Naive thymus-derived CD4-positive, alpha-beta T cell (primary cell): ENCODE measurements at regions of chr6 and their contacts with region 1.

Region 1: GRCh38 chr6:6547110-6547879 is 41.2 kb upstream of the LY86 start:
- DNase-seq: peak; percentile 62 to 88 (median 77)
- ATAC-seq: peak; percentile 95
- H3K4me3 ChIP-seq: peak overlapping the region; percentile 59
- H3K4me3 Mint-ChIP-seq: peak overlapping the region; percentile 75 to 88 (median 81)
- H3K27ac ChIP-seq: no peak overlapping the region
- H3K27ac Mint-ChIP-seq: peak overlapping the region in 2 of 9 donors; percentile 17 to 33
- H3K4me1 ChIP-seq: peaks cover 0 to 13% of the 10 kb centered on the region in 2 donors
- H3K4me1 Mint-ChIP-seq: peaks cover 0 to 9% (median 4%) of the 10 kb centered on the region in 7 donors
- H3K27me3 ChIP-seq: peaks cover 0 to 16% of the 10 kb centered on the region in 2 donors
- H3K27me3 Mint-ChIP-seq: peaks cover 35 to 78% (median 50%) of the 10 kb centered on the region in 5 donors

Region 2: GRCh38 chr6:5214570-5215052 is 1332.7 kb before region 1 on chr6:
- CTCF ChIA-PET with region 1: no interaction called
- POLR2A ChIA-PET with region 1: no interaction called
- intact Hi-C with region 1: loop called in 1 of 2 experiments (anchors 5 kb)
- DNase-seq: peak in 2 of 9 donors; percentile 5 to 32
- ATAC-seq: no peak
- H3K4me3 ChIP-seq: no peak overlapping the region
- H3K4me3 Mint-ChIP-seq: no peak overlapping the region
- H3K27ac ChIP-seq: no peak overlapping the region
- H3K27ac Mint-ChIP-seq: no peak overlapping the region
- H3K4me1 ChIP-seq: no peaks in the 10 kb centered on the region
- H3K4me1 Mint-ChIP-seq: peaks cover 0 to 5% (median 0%) of the 10 kb centered on the region in 7 donors
- H3K27me3 ChIP-seq: no peaks in the 10 kb centered on the region
- H3K27me3 Mint-ChIP-seq: no peaks in the 10 kb centered on the region

Region 3: DNA sequence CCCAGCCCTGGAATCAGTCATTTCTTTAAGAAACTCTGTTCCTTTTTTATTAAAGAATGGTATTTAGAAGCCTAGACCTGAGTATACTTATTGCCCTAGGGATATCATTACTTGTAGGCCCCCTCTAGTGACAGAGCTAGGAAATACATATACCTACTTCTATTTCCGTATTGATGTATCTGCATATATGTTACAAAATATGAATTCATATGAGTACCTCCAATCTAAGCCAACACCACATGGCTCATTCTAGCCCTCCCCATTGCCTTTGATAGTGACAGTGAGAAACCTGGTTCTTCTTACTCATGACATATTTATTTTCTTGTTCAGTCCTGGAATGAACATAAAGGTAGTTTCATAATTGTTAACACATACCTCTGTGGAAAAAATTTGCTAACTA is 1148.8 kb before region 1 on chr6:
- CTCF ChIA-PET with region 1: no interaction called
- POLR2A ChIA-PET with region 1: no interaction called
- intact Hi-C with region 1: loop called in 1 of 2 experiments (anchors 5 kb)
- DNase-seq: peak in 6 of 9 donors; percentile 17 to 43 (median 33)
- ATAC-seq: peak; percentile 71
- H3K4me3 ChIP-seq: no peak overlapping the region
- H3K4me3 Mint-ChIP-seq: no peak overlapping the region
- H3K27ac ChIP-seq: no peak overlapping the region
- H3K27ac Mint-ChIP-seq: no peak overlapping the region
- H3K4me1 ChIP-seq: no peaks in the 10 kb centered on the region
- H3K4me1 Mint-ChIP-seq: peaks cover 3 to 18% (median 9%) of the 10 kb centered on the region in 7 donors
- H3K27me3 ChIP-seq: no peaks in the 10 kb centered on the region
- H3K27me3 Mint-ChIP-seq: no peaks in the 10 kb centered on the region

Region 4: GRCh38 chr6:5584078-5584482 is 963.2 kb before region 1 on chr6:
- CTCF ChIA-PET with region 1: no interaction called
- POLR2A ChIA-PET with region 1: no interaction called
- intact Hi-C with region 1: loop called in 1 of 2 experiments (anchors 5 kb)
- DNase-seq: no peak
- ATAC-seq: no peak
- H3K4me3 ChIP-seq: no peak overlapping the region
- H3K4me3 Mint-ChIP-seq: peak overlapping the region in 1 of 10 donors; percentile 45
- H3K27ac ChIP-seq: no peak overlapping the region
- H3K27ac Mint-ChIP-seq: no peak overlapping the region
- H3K4me1 ChIP-seq: peaks cover 0 to 12% of the 10 kb centered on the region in 2 donors
- H3K4me1 Mint-ChIP-seq: peaks cover 9 to 25% (median 19%) of the 10 kb centered on the region in 7 donors
- H3K27me3 ChIP-seq: no peaks in the 10 kb centered on the region
- H3K27me3 Mint-ChIP-seq: no peaks in the 10 kb centered on the region

Region 5: DNA sequence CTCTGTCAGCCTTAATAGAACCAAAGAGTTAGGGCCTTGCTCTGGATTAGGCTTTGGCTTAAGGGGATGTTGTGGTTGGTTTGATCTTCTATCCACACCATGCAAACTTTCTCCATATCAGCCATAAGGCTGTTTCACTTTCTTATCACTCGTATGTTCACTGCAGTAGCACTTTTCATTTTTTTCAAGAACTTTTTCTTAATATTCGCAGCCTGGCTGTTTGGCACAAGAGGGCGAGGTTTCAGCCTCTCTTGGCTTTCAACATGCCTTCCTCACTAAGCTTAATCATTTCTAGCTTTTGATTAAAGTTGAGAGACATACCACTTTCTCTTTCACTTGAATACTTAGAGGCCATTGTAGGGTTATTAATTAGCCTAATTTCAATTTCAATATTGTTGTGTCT is 733.7 kb before region 1 on chr6:
- CTCF ChIA-PET with region 1: no interaction called
- POLR2A ChIA-PET with region 1: no interaction called
- intact Hi-C with region 1: loop called in 1 of 2 experiments (anchors 1 kb)
- DNase-seq: peak in 2 of 9 donors; percentile 13 to 29
- ATAC-seq: no peak
- H3K4me3 ChIP-seq: no peak overlapping the region
- H3K4me3 Mint-ChIP-seq: peak overlapping the region; percentile 1 to 65 (median 52)
- H3K27ac ChIP-seq: no peak overlapping the region
- H3K27ac Mint-ChIP-seq: peak overlapping the region; percentile 2 to 90 (median 71)
- H3K4me1 ChIP-seq: peaks cover 4 to 12% of the 10 kb centered on the region in 2 donors
- H3K4me1 Mint-ChIP-seq: peaks cover 18 to 39% (median 28%) of the 10 kb centered on the region in 7 donors
- H3K27me3 ChIP-seq: no peaks in the 10 kb centered on the region
- H3K27me3 Mint-ChIP-seq: peaks cover 0 to 3% (median 0%) of the 10 kb centered on the region in 5 donors

Region 6: GRCh38 chr6:6057424-6058053 is 489.8 kb before region 1 on chr6:
- CTCF ChIA-PET with region 1: no interaction called
- POLR2A ChIA-PET with region 1: no interaction called
- intact Hi-C with region 1: loop called (anchors 1 kb)
- DNase-seq: peak in 5 of 9 donors; percentile 14 to 40 (median 26)
- ATAC-seq: peak; percentile 63
- H3K4me3 ChIP-seq: no peak overlapping the region
- H3K4me3 Mint-ChIP-seq: no peak overlapping the region
- H3K27ac ChIP-seq: no peak overlapping the region
- H3K27ac Mint-ChIP-seq: no peak overlapping the region
- H3K4me1 ChIP-seq: no peaks in the 10 kb centered on the region
- H3K4me1 Mint-ChIP-seq: no peaks in the 10 kb centered on the region
- H3K27me3 ChIP-seq: peaks cover 0 to 3% of the 10 kb centered on the region in 2 donors
- H3K27me3 Mint-ChIP-seq: peaks cover 26 to 48% (median 32%) of the 10 kb centered on the region in 5 donors

Region 7: GRCh38 chr6:6525933-6526332 is 21.4 kb before region 1 on chr6:
- CTCF ChIA-PET with region 1: no interaction called
- POLR2A ChIA-PET with region 1: no interaction called
- intact Hi-C with region 1: no loop called
- DNase-seq: no peak
- ATAC-seq: no peak
- H3K4me3 ChIP-seq: no peak overlapping the region
- H3K4me3 Mint-ChIP-seq: no peak overlapping the region
- H3K27ac ChIP-seq: no peak overlapping the region
- H3K27ac Mint-ChIP-seq: no peak overlapping the region
- H3K4me1 ChIP-seq: no peaks in the 10 kb centered on the region
- H3K4me1 Mint-ChIP-seq: no peaks in the 10 kb centered on the region
- H3K27me3 ChIP-seq: no peaks in the 10 kb centered on the region
- H3K27me3 Mint-ChIP-seq: peaks cover 14 to 78% (median 44%) of the 10 kb centered on the region in 5 donors